ENCODE measurements at regions of chr10 and their contacts with region 1.

Region 1: DNA sequence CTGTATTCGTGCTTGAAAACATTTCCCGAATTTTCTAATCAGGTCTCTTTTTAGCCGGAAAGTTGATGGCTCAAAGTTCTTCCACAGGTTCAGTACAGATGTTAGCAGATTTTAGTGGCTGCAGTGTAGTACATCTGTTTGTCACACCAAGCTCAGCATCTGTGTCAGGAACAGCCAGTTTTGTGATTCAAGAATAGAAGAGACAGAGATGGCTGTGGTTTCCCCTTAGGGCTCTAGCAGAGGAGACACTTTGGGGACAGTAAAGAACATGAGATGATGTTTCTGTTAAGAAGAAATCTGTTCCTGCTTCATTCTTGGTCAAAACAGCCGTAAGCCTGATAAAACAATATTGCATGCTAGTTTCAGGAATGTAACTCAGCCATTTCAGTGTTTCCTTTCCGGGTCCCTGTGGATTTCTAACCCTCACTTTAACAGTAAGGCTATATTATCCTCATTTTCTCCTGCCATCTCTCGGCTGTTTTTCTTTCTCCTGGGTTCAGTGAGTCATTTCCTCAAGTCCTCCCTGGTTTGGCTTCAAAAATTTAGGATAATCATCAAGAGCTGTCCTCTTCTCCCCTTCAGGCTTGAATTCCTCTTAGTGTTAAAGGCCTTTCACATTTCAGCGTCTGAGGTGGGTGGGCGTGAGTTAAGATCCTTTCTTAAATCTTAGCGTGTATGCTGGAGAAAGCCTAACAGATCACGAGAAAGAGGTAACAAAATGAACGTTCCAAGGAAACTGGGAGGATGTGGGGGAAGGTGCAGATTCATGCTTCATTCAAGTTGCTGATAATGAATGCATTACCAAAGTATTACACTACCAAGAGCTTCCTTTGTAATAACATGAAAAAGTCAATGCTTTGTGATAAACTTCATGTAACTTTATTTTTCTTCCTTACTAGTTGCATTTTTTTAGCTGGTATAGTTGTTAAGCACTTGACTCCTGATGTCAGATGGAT is 37.1 kb upstream of the BICC1 start:
- DNase-seq: no peak
- H3K4me3 ChIP-seq: peak overlapping the region; percentile 17 to 49
- H3K27ac ChIP-seq: peak overlapping the region; percentile 83 to 87
- H3K4me1 ChIP-seq: peaks cover 0 to 19% of the 10 kb centered on the region in 2 donors
- H3K27me3 ChIP-seq: no peaks in the 10 kb centered on the region
- CTCF ChIP-seq: no peak

Region 2: GRCh38 chr10:58393317-58393716 is 82.3 kb before region 1 on chr10:
- intact Hi-C with region 1: no loop called
- DNase-seq: no peak
- H3K4me3 ChIP-seq: no peak overlapping the region
- H3K27ac ChIP-seq: no peak overlapping the region
- H3K4me1 ChIP-seq: no peaks in the 10 kb centered on the region
- H3K27me3 ChIP-seq: no peaks in the 10 kb centered on the region
- CTCF ChIP-seq: no peak

Region 3: GRCh38 chr10:58435297-58435985 is 40.2 kb before region 1 on chr10:
- intact Hi-C with region 1: loop called (anchors 5 kb)
- DNase-seq: peak; percentile 14 to 85
- H3K4me3 ChIP-seq: no peak overlapping the region
- H3K27ac ChIP-seq: no peak overlapping the region
- H3K4me1 ChIP-seq: peaks cover 0 to 15% of the 10 kb centered on the region in 2 donors
- H3K27me3 ChIP-seq: no peaks in the 10 kb centered on the region
- CTCF ChIP-seq: no peak

Region 4: DNA sequence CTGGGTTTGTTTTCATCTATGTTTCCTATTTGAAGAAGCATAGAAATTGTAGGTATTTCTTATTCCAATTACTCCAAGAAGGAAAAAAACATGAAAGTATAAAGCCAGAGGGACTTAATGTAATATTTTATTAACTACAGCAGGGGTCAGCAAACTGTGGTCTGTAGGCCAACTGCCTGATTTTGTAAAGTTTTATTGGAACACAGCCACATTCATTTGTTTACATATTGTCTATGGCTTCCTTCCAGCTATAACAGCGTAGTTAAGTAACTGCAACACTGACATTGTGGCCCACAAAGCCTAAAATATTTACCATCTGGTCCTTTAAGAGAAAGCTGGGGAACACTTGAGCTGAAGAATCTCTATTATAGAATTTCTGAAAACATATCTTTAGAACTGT is 343.3 kb after region 1 on chr10:
- intact Hi-C with region 1: no loop called
- DNase-seq: no peak
- H3K4me3 ChIP-seq: no peak overlapping the region
- H3K27ac ChIP-seq: no peak overlapping the region
- H3K4me1 ChIP-seq: peaks cover 0 to 7% of the 10 kb centered on the region in 2 donors
- H3K27me3 ChIP-seq: no peaks in the 10 kb centered on the region
- CTCF ChIP-seq: peak in 1 of 3 experiments; percentile 4

Region 5: DNA sequence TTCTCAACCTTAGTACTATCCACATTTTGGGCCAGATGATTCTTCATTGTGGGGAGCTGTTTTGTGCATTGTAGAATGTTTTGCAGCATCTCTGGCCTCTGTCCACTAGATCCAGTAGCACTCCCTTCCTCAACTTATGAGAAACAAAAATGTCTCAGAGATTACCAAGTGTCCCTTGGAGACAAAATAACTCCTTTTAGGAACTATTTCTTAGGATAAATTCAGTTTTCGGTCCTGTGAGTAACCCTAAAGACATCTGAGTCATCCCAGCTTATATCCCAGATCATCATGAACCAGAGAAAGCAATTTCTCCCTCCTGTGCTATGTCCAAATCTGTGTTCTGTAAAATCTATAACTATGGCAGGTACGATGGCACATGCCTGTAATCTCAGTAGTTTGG is 434.3 kb after region 1 on chr10:
- intact Hi-C with region 1: no loop called
- DNase-seq: no peak
- H3K4me3 ChIP-seq: no peak overlapping the region
- H3K27ac ChIP-seq: no peak overlapping the region
- H3K4me1 ChIP-seq: no peaks in the 10 kb centered on the region
- H3K27me3 ChIP-seq: no peaks in the 10 kb centered on the region
- CTCF ChIP-seq: no peak

Measured in ascending aorta (tissue), 2 donors.